ENCODE measurements at regions of chr9 and their contacts with region 1.

Region 1: GRCh38 chr9:134434894-134435506 is 108.7 kb downstream of the RXRA start:
- DNase-seq: peak; percentile 64 to 73 (median 69)
- H3K4me3 ChIP-seq: peak overlapping the region in 2 of 7 experiments; percentile 14 to 37
- H3K27ac ChIP-seq: no peak overlapping the region
- H3K4me1 ChIP-seq: peaks cover 0 to 26% (median 13%) of the 10 kb centered on the region in 4 experiments
- H3K27me3 ChIP-seq: no peaks in the 10 kb centered on the region

Region 2: GRCh38 chr9:134171316-134172197 is 263.4 kb before region 1 on chr9:
- CTCF ChIA-PET with region 1: interaction called, 22 read pairs
- POLR2A ChIA-PET with region 1: no interaction called
- DNase-seq: no peak
- H3K4me3 ChIP-seq: no peak overlapping the region
- H3K27ac ChIP-seq: no peak overlapping the region
- H3K4me1 ChIP-seq: peaks cover 3 to 46% (median 37%) of the 10 kb centered on the region in 4 experiments
- H3K27me3 ChIP-seq: no peaks in the 10 kb centered on the region

Measured in common myeloid progenitor, CD34-positive (primary cell).